SK-N-SH (cell line): ENCODE measurements at regions of chr17 and their contacts with region 1.

Region 1: GRCh38 chr17:60577147-60577915 is 22.7 kb upstream of the PPM1D start:
- DNase-seq: peak; percentile 33
- H3K4me3 ChIP-seq: no peak overlapping the region; a peak in 1 of 4 replicates
- H3K27ac ChIP-seq: peak overlapping the region in 1 of 2 experiments; percentile 25; a peak in 1 of 4 replicates
- H3K4me1 ChIP-seq: peaks cover 2 to 6% of the 10 kb centered on the region in 2 experiments; a peak in 2 of 4 replicates
- H3K27me3 ChIP-seq: no peaks in the 10 kb centered on the region
- CTCF ChIP-seq: peak; percentile 40
- EP300 ChIP-seq: no peak
- RAD21 ChIP-seq: peak; percentile 52

Region 2: DNA sequence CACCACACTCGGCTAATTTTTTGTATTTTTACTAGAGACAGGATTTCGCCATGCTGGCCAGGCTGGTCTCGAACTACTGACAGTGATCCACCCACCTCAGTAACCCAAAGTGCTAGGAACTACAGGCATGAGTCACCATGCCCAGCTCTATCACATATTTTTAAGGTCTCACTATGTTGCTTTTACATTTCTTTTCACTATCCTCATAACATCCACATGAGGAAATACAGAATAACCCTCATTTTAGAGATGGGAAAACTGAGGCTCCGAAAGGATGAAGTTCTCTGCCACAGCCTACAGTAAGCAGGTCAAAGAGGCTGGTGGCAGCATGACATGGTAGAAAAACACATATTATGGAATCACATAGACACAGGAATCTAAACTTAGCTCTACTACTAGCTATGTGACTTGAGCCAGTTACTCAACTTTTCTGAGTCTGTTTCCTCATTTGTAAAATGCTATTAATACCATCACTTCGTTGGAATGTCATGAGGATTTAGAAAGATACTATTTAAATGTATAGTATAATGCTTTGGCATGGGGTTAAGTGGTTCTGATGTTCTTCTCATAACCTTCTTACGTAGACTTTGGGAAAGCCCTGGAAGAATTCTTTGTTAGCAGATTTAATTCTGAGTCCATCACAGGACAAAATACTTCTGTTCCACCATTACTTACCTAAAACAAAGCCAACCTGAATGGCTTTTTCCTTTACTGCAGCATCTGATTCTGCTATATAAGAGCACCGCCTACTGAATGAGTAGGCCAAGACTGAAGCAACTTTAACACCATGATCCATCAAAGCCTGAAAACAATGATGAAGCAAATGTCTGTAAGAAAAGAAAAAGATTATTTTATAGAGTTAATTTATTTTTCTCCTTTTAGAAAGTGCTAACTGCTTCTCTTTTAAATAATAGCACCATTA is 83.3 kb before region 1 on chr17:
- CTCF ChIA-PET with region 1: no interaction called
- POLR2A ChIA-PET with region 1: no interaction called
- DNase-seq: no peak
- H3K4me3 ChIP-seq: no peak overlapping the region
- H3K27ac ChIP-seq: no peak overlapping the region
- H3K4me1 ChIP-seq: no peaks in the 10 kb centered on the region
- H3K27me3 ChIP-seq: no peaks in the 10 kb centered on the region
- CTCF ChIP-seq: no peak
- EP300 ChIP-seq: no peak
- RAD21 ChIP-seq: no peak

Region 3: GRCh38 chr17:60545465-60546454 is 31.6 kb before region 1 on chr17:
- CTCF ChIA-PET with region 1: no interaction called
- POLR2A ChIA-PET with region 1: no interaction called
- DNase-seq: no peak
- H3K4me3 ChIP-seq: no peak overlapping the region
- H3K27ac ChIP-seq: no peak overlapping the region
- H3K4me1 ChIP-seq: no peaks in the 10 kb centered on the region
- H3K27me3 ChIP-seq: no peaks in the 10 kb centered on the region
- CTCF ChIP-seq: no peak
- EP300 ChIP-seq: no peak
- RAD21 ChIP-seq: no peak

Region 4: GRCh38 chr17:60594734-60595133 is 17.4 kb after region 1 on chr17:
- CTCF ChIA-PET with region 1: interaction called, 13 read pairs
- POLR2A ChIA-PET with region 1: interaction called, 8 read pairs
- DNase-seq: no peak
- H3K4me3 ChIP-seq: no peak overlapping the region
- H3K27ac ChIP-seq: no peak overlapping the region
- H3K4me1 ChIP-seq: peaks cover 0 to 3% of the 10 kb centered on the region in 2 experiments; a peak in 2 of 4 replicates
- H3K27me3 ChIP-seq: no peaks in the 10 kb centered on the region
- CTCF ChIP-seq: no peak
- EP300 ChIP-seq: no peak
- RAD21 ChIP-seq: no peak